Heart right ventricle (tissue), 16 donors: ENCODE measurements at regions of chr6 and their contacts with region 1.

Region 1: DNA sequence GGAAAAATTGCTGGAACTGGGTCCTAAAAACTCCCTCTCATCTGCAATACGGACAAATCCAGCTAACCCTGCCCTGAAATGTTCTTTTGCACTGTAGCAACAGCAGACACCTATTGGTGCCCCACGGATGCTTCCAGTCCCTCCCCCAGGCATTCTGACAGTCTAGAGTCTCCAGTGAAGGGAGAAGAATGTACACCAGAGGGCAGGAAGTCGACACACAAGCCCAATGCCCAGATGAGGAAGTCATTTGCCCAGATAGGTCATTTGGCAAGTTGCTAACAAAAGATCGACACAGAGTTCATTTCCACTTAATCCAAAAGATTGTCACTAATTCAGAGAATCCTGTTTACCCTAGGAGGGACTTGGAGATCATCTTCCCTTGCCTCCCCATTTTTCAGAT is 293.0 kb upstream of the PRDM1 start:
- DNase-seq: no peak
- ATAC-seq: peak in 5 of 8 donors; percentile 44 to 76 (median 59)
- H3K4me3 ChIP-seq: no peak overlapping the region
- H3K27ac ChIP-seq: peak overlapping the region in 1 of 10 donors; percentile 71
- H3K4me1 ChIP-seq: peaks cover 0 to 52% (median 9%) of the 10 kb centered on the region in 9 donors
- H3K27me3 ChIP-seq: no peaks in the 10 kb centered on the region
- CTCF ChIP-seq: peak in 3 of 9 donors; percentile 16 to 38 (median 27)

Region 2: GRCh38 chr6:105691081-105691480 is 102.0 kb before region 1 on chr6:
- intact Hi-C with region 1: no loop called
- DNase-seq: no peak
- ATAC-seq: no peak
- H3K4me3 ChIP-seq: no peak overlapping the region
- H3K27ac ChIP-seq: no peak overlapping the region
- H3K4me1 ChIP-seq: peaks cover 0 to 19% (median 0%) of the 10 kb centered on the region in 9 donors
- H3K27me3 ChIP-seq: no peaks in the 10 kb centered on the region
- CTCF ChIP-seq: no peak

Region 3: DNA sequence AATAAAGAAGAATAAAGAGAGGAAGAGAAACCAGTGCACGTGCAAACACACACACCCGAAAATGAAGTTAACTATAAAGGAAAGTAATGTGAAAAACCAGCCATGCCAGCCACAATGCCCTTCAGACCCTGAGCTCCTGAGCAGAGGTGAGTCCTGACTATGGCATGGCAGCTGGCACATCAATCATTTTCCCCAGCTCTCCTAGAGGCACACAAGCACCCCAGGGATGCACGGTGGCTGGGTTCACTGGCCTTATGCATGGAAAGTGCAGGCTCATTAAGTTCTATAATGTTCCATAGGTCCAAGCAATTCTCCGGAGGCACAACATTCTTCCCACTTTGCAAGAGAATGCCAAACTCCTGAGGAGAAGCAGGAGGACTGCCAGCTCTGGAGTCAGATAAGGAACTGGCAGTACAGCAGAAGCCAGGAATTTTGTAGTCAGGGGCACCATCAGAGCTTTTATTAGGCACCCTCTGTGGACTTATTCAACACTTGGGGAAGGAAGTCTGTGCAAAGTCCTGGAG is 118.0 kb after region 1 on chr6:
- intact Hi-C with region 1: loop called in 1 of 10 experiments (anchors 10 kb)
- DNase-seq: peak in 1 of 2 donors; percentile 24
- ATAC-seq: peak; percentile 51 to 89 (median 62)
- H3K4me3 ChIP-seq: no peak overlapping the region
- H3K27ac ChIP-seq: peak overlapping the region in 1 of 10 donors; percentile 22
- H3K4me1 ChIP-seq: peaks cover 0 to 24% (median 8%) of the 10 kb centered on the region in 9 donors
- H3K27me3 ChIP-seq: no peaks in the 10 kb centered on the region
- CTCF ChIP-seq: no peak